Transverse colon (tissue), 4 donors: ENCODE measurements at regions of chr11 and their contacts with region 1.

Region 1: GRCh38 chr11:62880803-62881578 is at the start of gene SLC3A2:
- DNase-seq: peak; percentile 94
- H3K4me3 ChIP-seq: peak within 1 kb of the TSS; percentile 64 to 96 (median 78)
- H3K27ac ChIP-seq: peak within 1 kb of the TSS; percentile 96 to 100 (median 98)
- H3K4me1 ChIP-seq: peaks cover 33 to 53% (median 39%) of the 10 kb centered on the region in 4 donors
- H3K27me3 ChIP-seq: no peaks in the 10 kb centered on the region
- CTCF ChIP-seq: peak; percentile 45 to 75 (median 65)
- EP300 ChIP-seq: peak; percentile 32
- POLR2A ChIP-seq: peak; percentile 99
- total RNA-seq, gene SLC3A2: 32.4 to 163 (median 129) TPM

Region 2: DNA sequence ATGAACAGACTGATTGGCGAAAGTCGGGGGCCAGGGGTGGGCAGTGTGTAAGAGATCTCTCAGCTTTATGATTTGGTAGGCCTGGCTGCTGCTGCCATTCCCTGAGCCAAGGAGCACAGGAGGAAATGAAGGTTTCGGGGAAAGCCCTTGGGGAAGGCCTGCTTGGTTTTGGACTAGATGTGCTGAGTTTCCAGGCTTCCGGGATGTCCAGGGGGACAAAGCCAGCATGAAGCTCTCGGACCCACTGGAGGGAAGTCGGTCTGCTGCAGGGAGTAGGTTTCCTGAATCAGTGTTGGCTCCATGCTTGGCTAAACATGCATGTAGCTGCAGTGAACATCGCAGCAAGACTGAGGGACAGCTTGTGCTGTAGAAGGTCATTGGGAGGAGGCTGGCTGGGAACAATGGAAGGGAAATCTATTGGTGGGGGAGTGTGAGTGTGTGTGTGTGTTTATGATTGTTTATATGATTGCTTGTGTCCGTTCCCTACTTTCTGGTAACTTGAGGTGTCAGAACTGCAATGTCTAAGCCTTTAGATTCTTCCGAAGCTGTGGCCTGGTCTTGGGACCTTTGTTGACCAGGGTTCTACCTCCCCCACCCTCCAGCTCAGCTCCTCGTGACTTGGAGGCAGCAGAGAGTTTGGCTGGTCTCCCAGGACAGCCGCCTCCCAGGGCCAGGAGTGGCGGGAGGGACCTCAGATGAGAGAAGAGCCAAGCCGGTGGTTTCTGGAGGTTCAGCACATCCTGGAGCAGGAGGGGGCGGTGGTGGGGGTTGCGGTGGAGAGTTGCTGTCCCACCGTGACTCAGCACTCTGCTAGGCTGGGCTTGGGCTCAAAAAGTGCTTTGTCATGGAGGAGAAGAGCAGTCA is 909.5 kb before region 1 on chr11:
- in situ Hi-C with region 1: no loop called
- intact Hi-C with region 1: no loop called
- DNase-seq: peak; percentile 94
- H3K4me3 ChIP-seq: no peak overlapping the region
- H3K27ac ChIP-seq: peak overlapping the region; percentile 99 to 100 (median 100)
- H3K4me1 ChIP-seq: peaks cover 55 to 81% (median 76%) of the 10 kb centered on the region in 4 donors
- H3K27me3 ChIP-seq: no peaks in the 10 kb centered on the region
- CTCF ChIP-seq: no peak
- EP300 ChIP-seq: peak; percentile 44
- POLR2A ChIP-seq: peak; percentile 84

Region 3: GRCh38 chr11:64358907-64359711 is 1478.1 kb after region 1 on chr11 and contains the start of gene RPS6KA4:
- in situ Hi-C with region 1: no loop called
- intact Hi-C with region 1: no loop called
- DNase-seq: peak; percentile 73
- H3K4me3 ChIP-seq: peak within 1 kb of the TSS; percentile 58 to 99 (median 74)
- H3K27ac ChIP-seq: peak within 1 kb of the TSS; percentile 82 to 92 (median 88)
- H3K4me1 ChIP-seq: peaks cover 21 to 41% (median 36%) of the 10 kb centered on the region in 4 donors
- H3K27me3 ChIP-seq: no peaks in the 10 kb centered on the region
- CTCF ChIP-seq: no peak
- EP300 ChIP-seq: no peak
- POLR2A ChIP-seq: peak; percentile 42
- total RNA-seq, gene RPS6KA4: 14.5 to 86.0 (median 34.5) TPM

Region 4: DNA sequence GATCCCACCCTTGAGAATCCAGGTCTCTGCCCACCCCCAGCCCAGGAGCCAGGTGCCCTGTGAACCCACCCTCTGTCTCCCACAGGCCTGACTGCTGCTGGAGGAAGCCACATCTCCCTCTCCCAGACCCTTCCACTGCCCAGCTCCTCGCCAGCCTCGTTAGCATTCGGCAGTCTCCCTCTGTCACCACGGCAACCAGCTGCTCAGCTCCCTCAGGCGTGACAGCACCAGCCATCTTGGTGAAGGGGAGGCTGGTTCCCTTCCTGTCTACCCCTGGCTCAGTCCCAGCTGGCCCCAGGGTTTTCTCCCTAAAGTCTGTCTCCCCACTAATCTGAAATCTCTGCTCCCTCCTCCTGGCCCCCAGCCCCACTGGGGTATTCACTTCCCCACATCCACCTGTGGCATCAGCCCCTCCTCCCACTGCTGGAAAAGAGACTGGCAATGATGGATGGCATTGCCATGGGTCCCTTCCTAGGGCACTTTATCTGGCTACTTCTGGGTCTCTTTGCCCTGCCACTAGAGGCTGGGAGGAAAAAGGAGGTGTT is 1813.9 kb after region 1 on chr11:
- in situ Hi-C with region 1: no loop called
- intact Hi-C with region 1: loop called (anchors 5 kb)
- DNase-seq: no peak
- H3K4me3 ChIP-seq: no peak overlapping the region
- H3K27ac ChIP-seq: no peak overlapping the region
- H3K4me1 ChIP-seq: no peaks in the 10 kb centered on the region
- H3K27me3 ChIP-seq: peaks cover 39% of the 10 kb centered on the region
- CTCF ChIP-seq: no peak
- EP300 ChIP-seq: no peak
- POLR2A ChIP-seq: no peak